H1 (cell line): ENCODE measurements at regions of chr1 and their contacts with region 1.

Region 1: GRCh38 chr1:51331206-51332100 is 1.1 kb upstream of the TTC39A start:
- DNase-seq: no peak
- H3K4me3 ChIP-seq: peak overlapping the region in 2 of 4 experiments; percentile 64 to 69; a peak in 4 of 8 replicates
- H3K27ac ChIP-seq: no peak overlapping the region
- H3K4me1 ChIP-seq: peaks cover 7 to 12% (median 10%) of the 10 kb centered on the region in 4 experiments
- H3K27me3 ChIP-seq: peaks cover 0 to 15% (median 7%) of the 10 kb centered on the region in 4 experiments; a peak in 4 of 7 replicates
- CTCF ChIP-seq: no peak
- EP300 ChIP-seq: no peak
- POLR2A ChIP-seq: no peak
- RAD21 ChIP-seq: no peak

Region 2: DNA sequence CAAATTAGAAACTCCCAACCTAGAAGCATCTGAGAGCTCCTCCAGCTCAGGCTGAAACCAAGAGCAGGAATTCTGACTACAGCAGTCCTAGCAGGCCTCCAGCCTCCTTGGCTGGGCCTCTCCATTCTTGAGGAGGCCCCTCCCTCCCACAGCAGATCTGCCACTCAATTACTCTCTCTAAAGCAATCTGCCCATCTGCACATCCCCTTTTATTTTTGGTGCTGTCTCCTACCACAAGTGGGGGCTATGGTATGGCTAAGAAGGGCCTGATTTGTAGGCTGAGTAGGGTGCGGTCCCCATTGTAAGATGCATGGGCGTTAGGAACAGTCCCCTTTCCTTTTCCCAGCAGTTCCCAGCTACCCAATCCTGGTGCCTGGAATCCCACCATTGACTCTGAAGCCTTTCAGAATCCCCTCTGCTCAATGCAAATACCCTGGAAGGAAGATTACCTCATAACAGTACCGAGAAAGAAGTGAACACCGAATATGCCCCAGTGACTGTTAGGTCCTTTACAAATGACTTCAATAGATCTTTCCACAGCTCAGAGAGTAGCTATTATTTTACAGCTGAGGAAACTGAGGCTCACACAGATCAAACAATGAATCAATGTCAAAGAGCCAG is 10.5 kb after region 1 on chr1:
- CTCF ChIA-PET with region 1: interaction called, 16 read pairs
- POLR2A ChIA-PET with region 1: interaction called, 8 read pairs
- DNase-seq: no peak
- H3K4me3 ChIP-seq: no peak overlapping the region
- H3K27ac ChIP-seq: no peak overlapping the region
- H3K4me1 ChIP-seq: peaks cover 2 to 11% (median 7%) of the 10 kb centered on the region in 4 experiments; a peak in 6 of 7 replicates
- H3K27me3 ChIP-seq: peaks cover 3 to 19% (median 14%) of the 10 kb centered on the region in 4 experiments; a peak in 6 of 7 replicates
- CTCF ChIP-seq: peak in 1 of 3 experiments; percentile 12; a peak in 1 of 4 replicates
- EP300 ChIP-seq: no peak
- POLR2A ChIP-seq: no peak
- RAD21 ChIP-seq: peak; percentile 29 to 49